ENCODE measurements at regions of chr19 and their contacts with region 1.

Region 1: GRCh38 chr19:11137542-11138384 is 17.8 kb downstream of the SPC24 start:
- DNase-seq: peak in 8 of 9 experiments; percentile 18 to 80 (median 58)
- ATAC-seq: peak; percentile 82
- H3K4me3 ChIP-seq: peak overlapping the region; percentile 48 to 57
- H3K4me3 Mint-ChIP-seq: peak overlapping the region; percentile 84
- H3K27ac ChIP-seq: no peak overlapping the region
- H3K27ac Mint-ChIP-seq: no peak overlapping the region
- H3K4me1 ChIP-seq: peaks cover 13% of the 10 kb centered on the region
- H3K4me1 Mint-ChIP-seq: peaks cover 10% of the 10 kb centered on the region
- H3K27me3 ChIP-seq: no peaks in the 10 kb centered on the region
- H3K27me3 Mint-ChIP-seq: no peaks in the 10 kb centered on the region
- CTCF ChIP-seq: peak; percentile 55

Region 2: GRCh38 chr19:11155373-11156120 is 17.8 kb after region 1 on chr19 and contains the start of gene SPC24:
- CTCF ChIA-PET with region 1: interaction called, 12 read pairs
- POLR2A ChIA-PET with region 1: no interaction called
- intact Hi-C with region 1: loop called in 1 of 2 experiments (anchors 1 kb)
- DNase-seq: peak; percentile 76 to 97 (median 87)
- ATAC-seq: peak; percentile 96
- H3K4me3 ChIP-seq: peak within 1 kb of the TSS; percentile 52 to 62
- H3K4me3 Mint-ChIP-seq: peak within 1 kb of the TSS; percentile 87
- H3K27ac ChIP-seq: peak within 1 kb of the TSS in 1 of 2 experiments; percentile 51
- H3K27ac Mint-ChIP-seq: peak within 1 kb of the TSS; percentile 27
- H3K4me1 ChIP-seq: peaks cover 13% of the 10 kb centered on the region
- H3K4me1 Mint-ChIP-seq: peaks cover 14% of the 10 kb centered on the region
- H3K27me3 ChIP-seq: no peaks in the 10 kb centered on the region
- H3K27me3 Mint-ChIP-seq: no peaks in the 10 kb centered on the region
- CTCF ChIP-seq: no peak
- total RNA-seq, gene SPC24: 0.79 to 0.86 TPM

Region 3: GRCh38 chr19:11203194-11204075 is 65.7 kb after region 1 on chr19:
- CTCF ChIA-PET with region 1: interaction called, 24 read pairs
- POLR2A ChIA-PET with region 1: no interaction called
- intact Hi-C with region 1: loop called (anchors 1 kb)
- DNase-seq: peak in 7 of 9 experiments; percentile 18 to 65 (median 42)
- ATAC-seq: no peak
- H3K4me3 ChIP-seq: no peak overlapping the region
- H3K4me3 Mint-ChIP-seq: no peak overlapping the region
- H3K27ac ChIP-seq: no peak overlapping the region
- H3K27ac Mint-ChIP-seq: no peak overlapping the region
- H3K4me1 ChIP-seq: no peaks in the 10 kb centered on the region
- H3K4me1 Mint-ChIP-seq: no peaks in the 10 kb centered on the region
- H3K27me3 ChIP-seq: no peaks in the 10 kb centered on the region
- H3K27me3 Mint-ChIP-seq: peaks cover 3% of the 10 kb centered on the region
- CTCF ChIP-seq: no peak

Region 4: DNA sequence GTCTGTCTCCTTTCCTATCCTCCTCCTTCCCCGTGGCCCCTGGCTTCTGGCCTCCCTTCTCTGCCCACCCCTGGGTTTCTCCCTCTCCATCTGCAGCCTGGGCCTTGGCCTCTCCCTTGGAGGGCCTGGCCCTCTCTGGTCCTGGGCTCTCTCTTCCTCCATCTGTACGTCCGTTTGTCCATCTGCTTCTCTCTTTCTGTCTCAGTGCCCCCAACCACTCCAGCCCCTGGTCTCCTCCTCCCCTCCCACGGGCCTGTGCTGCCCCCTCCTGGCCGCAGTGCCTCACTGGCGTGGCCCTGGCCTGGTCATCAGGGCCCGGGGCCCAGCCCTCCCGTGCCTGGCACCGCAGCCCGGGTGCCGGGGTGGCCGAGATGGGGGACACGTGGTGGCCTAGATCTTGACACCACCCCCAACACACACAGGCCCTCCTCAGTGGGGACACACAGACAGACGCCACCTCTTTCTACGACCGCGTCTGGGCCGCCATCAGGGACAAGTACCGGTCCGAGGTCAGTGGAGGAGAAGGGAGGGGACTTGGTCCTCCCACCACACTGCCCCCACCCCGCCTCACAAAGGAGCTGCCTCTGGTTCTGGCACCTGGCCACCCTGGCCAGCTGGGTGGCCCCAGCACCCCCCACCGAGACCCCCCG is 309.0 kb after region 1 on chr19:
- CTCF ChIA-PET with region 1: no interaction called
- POLR2A ChIA-PET with region 1: no interaction called
- intact Hi-C with region 1: loop called in 1 of 2 experiments (anchors 5 kb)
- DNase-seq: peak in 7 of 9 experiments; percentile 30 to 65 (median 53)
- ATAC-seq: peak; percentile 69
- H3K4me3 ChIP-seq: no peak overlapping the region
- H3K4me3 Mint-ChIP-seq: no peak overlapping the region
- H3K27ac ChIP-seq: no peak overlapping the region
- H3K27ac Mint-ChIP-seq: no peak overlapping the region
- H3K4me1 ChIP-seq: no peaks in the 10 kb centered on the region
- H3K4me1 Mint-ChIP-seq: peaks cover 2% of the 10 kb centered on the region
- H3K27me3 ChIP-seq: no peaks in the 10 kb centered on the region
- H3K27me3 Mint-ChIP-seq: no peaks in the 10 kb centered on the region
- CTCF ChIP-seq: peak; percentile 56

Measured in CD8-positive, alpha-beta T cell (primary cell).